Activated CD4-positive, alpha-beta T cell treated with anti-CD3 and anti-CD28 coated beads for 36 hours (primary cell): ENCODE measurements at regions of chr12 and their contacts with region 1.

Region 1: GRCh38 chr12:65656904-65657351 is 167.4 kb upstream of the HMGA2 start:
- DNase-seq: peak; percentile 40
- ATAC-seq: peak; percentile 93
- H3K4me3 Mint-ChIP-seq: no peak overlapping the region
- H3K27ac Mint-ChIP-seq: no peak overlapping the region
- H3K4me1 Mint-ChIP-seq: peaks cover 28% of the 10 kb centered on the region
- H3K27me3 Mint-ChIP-seq: peaks cover 58% of the 10 kb centered on the region

Region 2: GRCh38 chr12:65248656-65249633 is 408.0 kb before region 1 on chr12:
- CTCF ChIA-PET with region 1: no interaction called
- POLR2A ChIA-PET with region 1: no interaction called
- intact Hi-C with region 1: loop called in 1 of 2 experiments (anchors 1 kb)
- DNase-seq: peak; percentile 18
- ATAC-seq: peak; percentile 85
- H3K4me3 Mint-ChIP-seq: no peak overlapping the region
- H3K27ac Mint-ChIP-seq: peak overlapping the region; percentile 72
- H3K4me1 Mint-ChIP-seq: peaks cover 16% of the 10 kb centered on the region
- H3K27me3 Mint-ChIP-seq: no peaks in the 10 kb centered on the region

Region 3: DNA sequence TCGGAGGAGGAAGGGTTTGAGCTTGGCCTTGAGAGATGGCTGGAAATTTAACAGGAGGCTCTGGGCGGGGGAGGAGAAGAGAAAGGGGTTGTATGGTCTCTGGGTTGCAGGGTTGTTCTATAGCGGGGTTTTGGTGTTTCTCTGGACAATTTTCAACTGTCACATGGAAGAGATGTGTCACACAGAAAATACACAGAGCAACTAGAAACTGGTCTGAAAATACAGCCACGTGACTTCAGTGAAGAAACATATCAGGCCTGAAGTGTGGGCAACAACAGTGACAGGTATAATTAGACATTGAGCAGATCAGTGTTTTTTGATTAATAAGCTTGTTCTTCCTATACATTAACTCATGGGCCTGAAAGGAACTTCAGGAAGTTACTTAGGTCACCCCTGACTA is 37.9 kb before region 1 on chr12:
- CTCF ChIA-PET with region 1: no interaction called
- POLR2A ChIA-PET with region 1: no interaction called
- intact Hi-C with region 1: loop called in 1 of 2 experiments (anchors 2 kb)
- DNase-seq: no peak
- ATAC-seq: peak; percentile 66
- H3K4me3 Mint-ChIP-seq: peak overlapping the region; percentile 22
- H3K27ac Mint-ChIP-seq: peak overlapping the region; percentile 51
- H3K4me1 Mint-ChIP-seq: peaks cover 11% of the 10 kb centered on the region
- H3K27me3 Mint-ChIP-seq: peaks cover 35% of the 10 kb centered on the region

Region 4: DNA sequence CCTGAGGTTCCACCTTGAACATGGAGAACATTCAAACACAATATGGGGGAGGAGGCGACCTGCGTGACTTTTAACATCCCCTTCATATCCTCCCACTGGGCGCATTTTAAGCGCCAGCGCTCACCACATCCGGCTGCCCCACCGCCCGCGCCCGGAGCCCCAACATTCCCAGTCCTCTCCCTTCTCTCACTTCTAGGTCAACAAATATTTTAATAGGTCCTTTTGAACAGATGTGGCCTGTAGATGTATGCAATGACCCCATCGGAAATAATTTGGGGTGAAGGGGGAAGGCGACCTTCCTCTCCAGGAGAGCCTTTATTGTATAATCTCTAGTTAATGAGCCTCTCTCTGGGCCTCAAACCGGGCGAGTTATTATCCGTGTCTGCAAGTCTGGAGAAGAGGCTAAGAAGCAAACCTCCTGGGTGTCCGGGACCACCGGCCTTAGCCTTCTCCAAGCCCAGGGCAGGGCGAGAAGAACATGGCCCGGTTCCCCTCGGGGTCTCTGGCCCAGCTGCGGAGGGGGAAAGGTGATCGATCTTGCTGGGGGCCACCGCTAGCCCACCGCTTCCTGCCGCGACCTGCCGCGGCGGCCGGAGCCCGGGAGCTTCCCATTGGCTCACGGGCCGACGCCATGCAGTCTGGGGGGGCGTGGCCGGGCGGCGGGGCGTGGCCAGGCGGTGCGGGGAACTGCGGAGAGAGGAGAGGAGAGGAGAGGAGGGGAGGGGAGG is 84.1 kb after region 1 on chr12:
- CTCF ChIA-PET with region 1: no interaction called
- POLR2A ChIA-PET with region 1: no interaction called
- intact Hi-C with region 1: loop called (anchors 5 kb)
- DNase-seq: peak; percentile 85
- ATAC-seq: peak; percentile 86
- H3K4me3 Mint-ChIP-seq: peak overlapping the region; percentile 67
- H3K27ac Mint-ChIP-seq: peak overlapping the region; percentile 78
- H3K4me1 Mint-ChIP-seq: peaks cover 11% of the 10 kb centered on the region
- H3K27me3 Mint-ChIP-seq: peaks cover 30% of the 10 kb centered on the region

Region 5: GRCh38 chr12:65756956-65757511 is 100.1 kb after region 1 on chr12:
- CTCF ChIA-PET with region 1: no interaction called
- POLR2A ChIA-PET with region 1: no interaction called
- intact Hi-C with region 1: loop called (anchors 2 kb)
- DNase-seq: peak; percentile 55
- ATAC-seq: peak; percentile 98
- H3K4me3 Mint-ChIP-seq: no peak overlapping the region
- H3K27ac Mint-ChIP-seq: peak overlapping the region; percentile 64
- H3K4me1 Mint-ChIP-seq: peaks cover 15% of the 10 kb centered on the region
- H3K27me3 Mint-ChIP-seq: peaks cover 21% of the 10 kb centered on the region

Region 6: DNA sequence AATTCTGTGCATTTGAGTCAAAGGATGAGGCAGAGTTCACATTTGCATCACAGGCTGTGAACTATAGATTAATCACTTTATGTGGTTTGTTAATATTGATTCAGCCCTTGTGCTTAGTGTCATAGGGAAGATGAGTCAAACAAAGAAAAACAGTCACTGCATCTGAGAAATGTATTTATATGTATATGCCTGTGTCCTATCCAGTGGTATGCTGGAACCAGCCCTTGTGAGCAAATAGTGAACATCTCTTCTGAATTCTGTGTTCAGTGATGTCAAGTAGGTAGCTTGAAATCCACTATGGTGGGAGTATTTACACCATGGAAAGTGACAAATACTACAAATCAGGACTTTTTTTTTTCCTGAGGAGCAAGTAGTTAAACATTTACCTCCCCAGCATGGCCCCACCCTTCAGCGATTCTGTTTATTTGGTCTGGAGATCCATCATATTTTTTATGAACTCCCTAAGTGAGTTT is 295.8 kb after region 1 on chr12:
- CTCF ChIA-PET with region 1: no interaction called
- POLR2A ChIA-PET with region 1: no interaction called
- intact Hi-C with region 1: loop called (anchors 2 to 10 kb)
- DNase-seq: peak; percentile 10
- ATAC-seq: peak; percentile 100
- H3K4me3 Mint-ChIP-seq: no peak overlapping the region
- H3K27ac Mint-ChIP-seq: no peak overlapping the region
- H3K4me1 Mint-ChIP-seq: peaks cover 12% of the 10 kb centered on the region
- H3K27me3 Mint-ChIP-seq: peaks cover 8% of the 10 kb centered on the region

Region 7: GRCh38 chr12:67077617-67078016 is 1420.7 kb after region 1 on chr12:
- CTCF ChIA-PET with region 1: no interaction called
- POLR2A ChIA-PET with region 1: no interaction called
- intact Hi-C with region 1: loop called in 1 of 2 experiments (anchors 5 kb)
- DNase-seq: peak; percentile 5
- ATAC-seq: peak; percentile 58
- H3K4me3 Mint-ChIP-seq: no peak overlapping the region
- H3K27ac Mint-ChIP-seq: no peak overlapping the region
- H3K4me1 Mint-ChIP-seq: peaks cover 9% of the 10 kb centered on the region
- H3K27me3 Mint-ChIP-seq: peaks cover 31% of the 10 kb centered on the region